GM12878 (cell line): ENCODE measurements at regions of chr3 and their contacts with region 1.

Region 1: GRCh38 chr3:57961828-57962447 is 46.3 kb upstream of the FLNB start:
- DNase-seq: no peak
- ATAC-seq: peak; percentile 57
- H3K4me3 ChIP-seq: no peak overlapping the region
- H3K27ac ChIP-seq: no peak overlapping the region
- H3K4me1 ChIP-seq: peaks cover 14% of the 10 kb centered on the region
- H3K27me3 ChIP-seq: no peaks in the 10 kb centered on the region
- CTCF ChIP-seq: peak; percentile 28 to 49 (median 40); a peak in 4 of 6 replicates
- EP300 ChIP-seq: no peak
- POLR2A ChIP-seq: no peak
- RAD21 ChIP-seq: peak; percentile 61

Region 2: GRCh38 chr3:57974796-57975388 is 13.0 kb after region 1 on chr3:
- CTCF ChIA-PET with region 1: interaction called, 10 read pairs
- POLR2A ChIA-PET with region 1: interaction called, 3 read pairs
- RAD21 ChIA-PET with region 1: interaction called, 5 read pairs
- SMC1A ChIA-PET with region 1: interaction called, 4 read pairs
- in situ Hi-C with region 1: no loop called
- intact Hi-C with region 1: no loop called
- DNase-seq: no peak
- ATAC-seq: no peak
- H3K4me3 ChIP-seq: no peak overlapping the region
- H3K27ac ChIP-seq: no peak overlapping the region
- H3K4me1 ChIP-seq: no peaks in the 10 kb centered on the region
- H3K27me3 ChIP-seq: no peaks in the 10 kb centered on the region
- CTCF ChIP-seq: no peak
- EP300 ChIP-seq: no peak
- POLR2A ChIP-seq: no peak
- RAD21 ChIP-seq: no peak

Region 3: GRCh38 chr3:57998366-57999283 is 36.7 kb after region 1 on chr3:
- CTCF ChIA-PET with region 1: interaction called, 15 read pairs
- POLR2A ChIA-PET with region 1: no interaction called
- RAD21 ChIA-PET with region 1: interaction called, 11 read pairs
- SMC1A ChIA-PET with region 1: interaction called, 11 read pairs
- in situ Hi-C with region 1: no loop called
- intact Hi-C with region 1: no loop called
- DNase-seq: no peak
- ATAC-seq: peak; percentile 90
- H3K4me3 ChIP-seq: peak overlapping the region; percentile 59; the same call in 1 of the 2 replicates
- H3K27ac ChIP-seq: peak overlapping the region; percentile 81
- H3K4me1 ChIP-seq: peaks cover 8% of the 10 kb centered on the region
- H3K27me3 ChIP-seq: no peaks in the 10 kb centered on the region
- CTCF ChIP-seq: no peak
- EP300 ChIP-seq: no peak
- POLR2A ChIP-seq: no peak
- RAD21 ChIP-seq: no peak